A549 (cell line): ENCODE measurements at regions of chr22 and their contacts with region 1.

Region 1: DNA sequence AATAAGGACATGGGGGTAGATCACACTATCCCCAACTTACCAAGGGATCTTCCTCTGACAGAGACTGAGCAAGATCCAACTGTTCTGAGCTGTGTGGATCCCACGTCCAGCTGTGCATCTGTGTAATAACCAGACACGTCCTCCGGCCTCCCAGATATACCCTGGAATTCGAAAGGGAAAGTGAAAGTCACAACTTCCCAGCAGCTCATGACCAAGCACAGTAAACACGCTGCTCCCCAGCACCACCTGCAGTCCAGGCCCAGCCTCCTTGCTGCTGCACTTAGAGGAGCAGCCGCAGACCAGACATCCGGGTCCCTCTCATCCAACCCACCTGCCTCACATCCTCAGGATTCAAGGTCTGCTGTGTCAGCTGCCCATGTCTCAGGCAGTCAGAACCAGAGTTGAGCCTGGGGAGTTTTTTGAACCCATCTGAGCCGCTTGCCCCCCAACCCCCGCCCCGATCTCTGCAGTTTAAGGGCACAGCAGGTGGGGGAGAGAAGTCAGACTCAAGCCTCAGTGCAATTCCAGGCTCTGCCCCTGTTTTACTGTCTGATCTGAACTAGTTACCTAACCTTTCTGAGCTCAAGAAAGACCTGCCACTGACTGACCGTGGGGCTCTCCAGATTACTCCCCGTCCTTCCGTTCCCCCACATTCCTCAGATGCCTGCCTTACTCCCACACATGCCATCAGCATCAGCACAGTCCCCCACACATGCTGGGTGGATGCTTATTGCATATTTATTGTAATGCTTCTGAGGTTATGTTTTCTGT is at the start of gene APOL2:
- DNase-seq: peak; percentile 82 to 85
- ATAC-seq: peak; percentile 99
- H3K4me3 ChIP-seq: peak within 1 kb of the TSS; percentile 60
- H3K27ac ChIP-seq: peak within 1 kb of the TSS; percentile 73 to 92
- H3K4me1 ChIP-seq: peaks cover 18% of the 10 kb centered on the region
- CTCF ChIP-seq: peak; percentile 28; the same call in 1 of the 3 replicates
- EP300 ChIP-seq: no peak
- POLR2A ChIP-seq: no peak
- RAD21 ChIP-seq: peak; percentile 19 to 28; a peak in 2 of 5 replicates
- polyA plus RNA-seq, gene APOL2: 8.7 and 12.3 TPM in 2 replicates

Region 2: DNA sequence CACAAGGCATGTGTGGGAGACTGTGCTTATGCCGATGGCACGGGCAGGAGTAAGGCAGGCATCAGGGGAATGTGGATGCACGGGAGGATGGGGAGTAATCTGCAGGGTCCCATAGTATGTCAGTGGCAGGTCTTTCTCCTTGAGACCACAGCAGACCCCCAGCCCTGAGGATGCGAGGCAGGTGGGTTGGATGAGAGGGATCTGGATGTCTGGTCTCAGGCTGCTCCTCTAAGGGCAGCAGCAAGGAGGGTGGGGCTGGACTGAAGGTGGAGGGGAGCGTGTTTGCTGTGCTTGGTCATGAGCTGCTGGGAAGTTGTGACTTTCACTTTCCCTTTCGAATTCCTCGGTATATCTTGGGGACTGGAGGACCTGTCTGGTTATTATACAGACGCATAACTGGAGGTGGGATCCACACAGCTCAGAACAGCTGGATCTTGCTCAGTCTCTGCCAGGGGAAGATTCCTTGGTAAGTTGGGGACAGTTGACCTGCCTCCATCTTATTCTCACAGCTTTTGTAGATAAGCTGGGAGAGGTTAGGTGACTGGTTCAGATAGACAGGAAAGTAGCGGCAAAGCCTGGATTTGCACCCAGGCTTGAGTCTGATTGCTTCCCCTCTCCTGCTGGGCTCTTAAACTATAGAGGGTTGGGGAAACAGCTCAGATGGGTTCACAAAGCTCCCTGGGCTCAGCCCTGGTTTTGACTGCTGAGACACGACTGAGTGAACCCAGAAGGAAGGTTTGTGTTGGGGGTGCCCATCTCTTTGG is 13.3 kb after region 1 on chr22 and contains the start of gene APOL1:
- CTCF ChIA-PET with region 1: interaction called, 12 read pairs
- POLR2A ChIA-PET with region 1: interaction called, 4 read pairs
- DNase-seq: peak in 1 of 2 experiments; percentile 19
- ATAC-seq: peak; percentile 37 to 54; a peak in 5 of 6 replicates
- H3K4me3 ChIP-seq: 0 out of 3 replicates have a peak within 1 kb of the TSS, but pooled peaks have one; percentile 12
- H3K27ac ChIP-seq: peak within 1 kb of the TSS; percentile 85 to 90
- H3K4me1 ChIP-seq: peaks cover 61% of the 10 kb centered on the region
- CTCF ChIP-seq: no peak
- EP300 ChIP-seq: no peak
- POLR2A ChIP-seq: no peak
- RAD21 ChIP-seq: no peak
- polyA plus RNA-seq, gene APOL1: 2.0 and 3.3 TPM in 2 replicates